ENCODE measurements at regions of chr17 and their contacts with region 1.

Region 1: DNA sequence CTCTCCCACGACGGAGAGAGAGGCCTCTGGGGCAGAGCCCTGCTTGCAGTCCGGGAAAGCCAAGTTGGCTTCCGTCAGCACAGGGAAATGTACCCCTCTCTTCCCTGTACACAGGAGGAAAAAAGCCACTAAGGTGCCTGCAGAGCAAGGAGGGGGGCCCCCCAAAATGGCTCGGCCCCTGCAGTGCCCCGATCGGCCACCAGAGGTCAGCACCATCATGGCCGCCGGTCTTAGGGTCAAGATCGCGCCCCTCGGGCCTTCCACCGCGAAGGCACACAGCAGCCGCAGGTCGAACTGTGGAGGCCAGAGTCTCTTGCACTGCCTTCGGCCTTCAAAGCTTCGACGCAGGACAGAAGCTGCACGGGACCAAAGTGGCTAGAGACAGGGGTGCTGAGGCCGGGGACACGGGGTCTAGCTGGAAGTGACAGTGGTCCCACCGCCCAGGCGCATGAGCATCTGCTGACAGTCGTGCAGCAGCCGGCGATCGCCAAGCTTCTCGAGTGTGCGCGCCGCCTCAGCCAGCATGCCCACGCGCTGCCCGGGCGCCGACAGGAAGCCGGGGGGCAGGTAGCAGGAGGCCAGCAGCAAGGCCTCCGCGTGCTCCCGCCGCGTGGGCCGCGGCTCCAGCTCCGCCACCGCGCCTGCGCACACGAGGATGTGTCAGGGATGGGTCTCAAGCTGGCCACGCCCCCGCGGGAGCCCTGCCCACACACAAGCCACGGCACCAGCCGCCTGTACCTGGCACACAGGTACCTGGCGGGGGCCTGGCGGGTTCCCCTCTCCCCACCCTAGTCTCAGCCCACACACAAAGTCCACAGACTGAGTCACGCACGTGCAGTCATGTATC is 24.4 kb downstream of the SREBF1 start:
- DNase-seq: peak in 4 of 5 donors; percentile 58 to 71 (median 62)
- H3K4me3 ChIP-seq: no peak overlapping the region
- H3K4me3 Mint-ChIP-seq: no peak overlapping the region
- H3K27ac ChIP-seq: peak overlapping the region; percentile 8
- H3K27ac Mint-ChIP-seq: peak overlapping the region in 5 of 7 donors; percentile 24 to 60 (median 53)
- H3K4me1 ChIP-seq: peaks cover 8% of the 10 kb centered on the region
- H3K4me1 Mint-ChIP-seq: peaks cover 0 to 12% (median 2%) of the 10 kb centered on the region in 4 donors
- H3K27me3 ChIP-seq: no peaks in the 10 kb centered on the region
- H3K27me3 Mint-ChIP-seq: no peaks in the 10 kb centered on the region

Region 2: DNA sequence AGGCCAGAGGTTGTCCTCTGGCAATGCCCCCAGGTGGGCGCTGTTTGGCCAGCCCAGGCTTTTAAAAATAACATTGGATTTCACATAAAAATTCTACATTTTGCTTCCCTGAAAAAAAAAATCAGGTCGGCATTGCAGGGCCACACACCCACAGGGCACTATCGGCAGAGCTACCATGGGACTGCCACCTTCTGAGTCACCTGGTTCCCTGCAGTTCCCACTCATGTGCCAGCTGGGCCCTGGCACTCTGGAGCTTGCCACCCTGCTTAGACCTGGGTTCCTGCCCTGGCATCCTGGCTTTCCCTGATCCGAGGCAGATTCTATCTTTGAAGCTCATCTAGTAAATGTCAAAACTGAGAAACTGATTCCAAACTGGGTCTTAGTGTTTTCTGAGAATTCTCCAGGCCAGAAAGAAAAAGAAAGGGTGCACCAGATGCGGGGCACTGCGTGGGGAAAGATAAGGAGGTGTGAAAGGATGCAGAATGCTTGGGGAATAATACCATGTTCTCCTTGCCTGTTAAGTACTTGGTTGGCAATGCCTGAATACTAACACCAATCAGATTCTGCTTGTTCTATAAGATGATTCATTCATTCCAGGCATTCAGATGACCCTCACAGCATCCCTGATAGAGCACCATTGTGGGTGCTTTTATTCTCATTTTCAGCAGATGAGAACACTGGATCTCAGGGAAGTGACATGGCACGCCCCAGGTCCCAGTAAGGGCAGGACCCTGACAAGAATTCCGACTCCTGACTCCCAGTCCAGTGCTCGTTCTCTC is 79.4 kb before region 1 on chr17:
- CTCF ChIA-PET with region 1: no interaction called
- POLR2A ChIA-PET with region 1: no interaction called
- intact Hi-C with region 1: no loop called
- DNase-seq: no peak
- H3K4me3 ChIP-seq: no peak overlapping the region
- H3K4me3 Mint-ChIP-seq: no peak overlapping the region
- H3K27ac ChIP-seq: no peak overlapping the region
- H3K27ac Mint-ChIP-seq: no peak overlapping the region
- H3K4me1 ChIP-seq: no peaks in the 10 kb centered on the region
- H3K4me1 Mint-ChIP-seq: peaks cover 7 to 18% (median 11%) of the 10 kb centered on the region in 4 donors
- H3K27me3 ChIP-seq: no peaks in the 10 kb centered on the region
- H3K27me3 Mint-ChIP-seq: no peaks in the 10 kb centered on the region

Region 3: DNA sequence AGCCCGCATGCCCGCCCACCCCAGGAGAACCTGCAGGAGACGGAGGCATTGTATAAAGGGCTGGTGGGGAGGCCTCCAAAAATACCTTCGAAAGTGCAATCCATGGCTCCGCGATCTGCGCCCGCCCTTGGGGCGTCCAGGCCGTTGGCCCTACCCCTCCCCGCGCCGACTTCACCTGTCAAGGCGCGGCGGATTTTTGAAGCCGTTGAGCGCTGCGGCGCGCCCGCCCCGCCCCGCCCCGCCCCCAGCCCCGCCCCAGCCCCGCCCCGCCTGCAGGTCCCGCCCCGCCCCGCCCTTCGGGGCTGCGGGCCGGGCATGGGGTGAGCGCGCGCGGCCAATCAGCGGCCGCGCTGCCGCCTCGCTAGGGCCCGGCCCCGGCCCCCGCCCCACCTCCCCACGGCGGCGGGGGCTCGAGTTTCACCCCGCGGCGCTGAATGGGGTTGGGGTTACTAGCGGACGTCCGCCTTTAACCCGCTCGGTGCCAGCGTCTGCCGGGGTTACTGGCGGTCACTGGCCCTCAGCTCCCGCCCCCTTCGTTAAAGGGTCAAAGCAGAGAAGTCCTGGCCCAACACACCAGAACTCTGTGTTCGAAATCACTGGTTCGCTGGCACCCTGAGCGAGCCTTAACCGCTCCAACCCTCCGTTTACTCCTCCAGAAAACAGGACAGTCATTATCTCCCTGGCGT is 11.1 kb after region 1 on chr17:
- CTCF ChIA-PET with region 1: interaction called, 17 read pairs
- POLR2A ChIA-PET with region 1: interaction called, 3 read pairs
- intact Hi-C with region 1: no loop called
- DNase-seq: peak; percentile 81 to 87 (median 85)
- H3K4me3 ChIP-seq: peak overlapping the region; percentile 38 to 53
- H3K4me3 Mint-ChIP-seq: peak overlapping the region; percentile 76 to 92 (median 81)
- H3K27ac ChIP-seq: peak overlapping the region; percentile 82
- H3K27ac Mint-ChIP-seq: peak overlapping the region; percentile 88 to 97 (median 96)
- H3K4me1 ChIP-seq: peaks cover 87% of the 10 kb centered on the region
- H3K4me1 Mint-ChIP-seq: peaks cover 41 to 96% (median 76%) of the 10 kb centered on the region in 4 donors
- H3K27me3 ChIP-seq: no peaks in the 10 kb centered on the region
- H3K27me3 Mint-ChIP-seq: no peaks in the 10 kb centered on the region

Region 4: DNA sequence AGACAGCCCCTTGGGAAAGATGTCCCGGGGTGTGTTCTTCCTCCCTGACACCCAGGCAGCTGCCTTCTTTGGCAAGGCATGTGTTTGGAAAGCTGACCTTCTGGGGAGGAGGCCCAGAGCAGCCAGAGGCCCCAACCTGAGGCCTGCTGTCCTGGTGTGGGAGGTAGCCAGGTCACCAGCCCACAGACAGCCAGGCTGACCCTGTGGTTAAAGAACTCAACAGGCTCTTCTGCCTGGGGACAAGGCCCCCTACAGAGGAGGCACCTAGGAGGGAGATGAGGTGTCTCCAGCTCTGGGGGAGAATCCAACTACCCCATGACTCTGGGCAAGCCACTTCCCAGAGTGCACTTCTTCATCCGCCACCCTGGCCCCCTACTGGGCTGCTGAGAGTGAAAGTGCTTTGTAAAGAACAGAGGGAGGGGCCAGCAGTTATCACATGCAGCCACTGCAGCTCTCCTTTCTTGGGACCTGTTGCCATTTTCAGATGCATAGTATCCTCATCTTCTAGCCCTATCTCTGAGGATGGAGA is 37.5 kb after region 1 on chr17:
- CTCF ChIA-PET with region 1: interaction called, 234 read pairs
- POLR2A ChIA-PET with region 1: interaction called, 5 read pairs
- intact Hi-C with region 1: loop called (anchors 1 kb)
- DNase-seq: peak; percentile 64 to 80 (median 71)
- H3K4me3 ChIP-seq: peak overlapping the region in 1 of 2 donors; percentile 22
- H3K4me3 Mint-ChIP-seq: peak overlapping the region in 7 of 8 donors; percentile 32 to 81 (median 55)
- H3K27ac ChIP-seq: peak overlapping the region; percentile 73
- H3K27ac Mint-ChIP-seq: peak overlapping the region; percentile 93 to 97 (median 95)
- H3K4me1 ChIP-seq: peaks cover 54% of the 10 kb centered on the region
- H3K4me1 Mint-ChIP-seq: peaks cover 25 to 63% (median 48%) of the 10 kb centered on the region in 4 donors
- H3K27me3 ChIP-seq: no peaks in the 10 kb centered on the region
- H3K27me3 Mint-ChIP-seq: no peaks in the 10 kb centered on the region

Region 5: DNA sequence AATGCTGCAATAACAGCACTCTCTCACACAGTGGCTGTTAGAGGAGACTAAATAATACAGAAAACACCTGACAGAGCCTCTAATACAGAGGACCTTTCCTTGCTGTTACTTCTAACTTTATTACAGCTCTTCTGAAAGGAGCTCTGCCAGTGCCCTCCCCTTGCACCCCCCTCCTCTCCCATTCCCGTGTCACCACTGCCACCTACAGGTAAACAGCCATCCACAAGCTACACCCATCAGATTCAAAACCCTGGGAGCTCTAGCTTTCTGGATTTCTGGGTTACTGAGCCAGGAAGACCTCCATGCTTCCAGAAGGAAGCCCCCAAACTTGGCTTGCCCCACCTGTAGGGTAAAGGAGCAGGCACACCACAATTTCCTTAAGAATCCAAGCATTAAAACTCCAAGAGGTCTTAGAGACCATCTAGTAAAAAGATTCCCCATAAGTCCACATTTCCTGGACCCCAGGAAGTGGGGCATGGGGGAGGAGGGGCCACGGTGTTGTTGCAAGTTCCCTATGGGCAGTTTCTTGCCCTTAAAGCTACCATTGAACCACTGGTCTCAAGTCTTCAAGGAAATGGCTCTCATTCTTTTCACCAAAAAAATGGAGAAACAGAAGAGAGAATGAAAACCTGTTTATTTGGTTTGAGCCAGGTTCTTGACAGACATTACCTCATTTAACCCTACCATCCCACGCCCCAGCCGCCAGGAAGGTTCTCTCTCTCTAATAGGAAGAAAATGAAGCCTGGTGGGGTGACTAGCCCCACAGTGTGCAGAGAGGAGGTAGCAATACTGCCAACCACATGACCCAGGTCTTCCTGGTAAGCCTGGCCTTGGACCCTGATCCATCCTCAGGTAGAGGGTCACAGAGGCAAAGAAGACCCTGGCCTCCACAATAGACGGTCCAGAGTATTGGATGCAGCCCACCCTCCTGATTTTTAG is 107.0 kb after region 1 on chr17:
- CTCF ChIA-PET with region 1: interaction called, 8 read pairs
- POLR2A ChIA-PET with region 1: no interaction called
- intact Hi-C with region 1: loop called (anchors 1 kb)
- DNase-seq: peak; percentile 58 to 71 (median 61)
- H3K4me3 ChIP-seq: no peak overlapping the region
- H3K4me3 Mint-ChIP-seq: no peak overlapping the region
- H3K27ac ChIP-seq: no peak overlapping the region
- H3K27ac Mint-ChIP-seq: no peak overlapping the region
- H3K4me1 ChIP-seq: peaks cover 3% of the 10 kb centered on the region
- H3K4me1 Mint-ChIP-seq: peaks cover 6 to 25% (median 8%) of the 10 kb centered on the region in 4 donors
- H3K27me3 ChIP-seq: no peaks in the 10 kb centered on the region
- H3K27me3 Mint-ChIP-seq: no peaks in the 10 kb centered on the region

Region 6: DNA sequence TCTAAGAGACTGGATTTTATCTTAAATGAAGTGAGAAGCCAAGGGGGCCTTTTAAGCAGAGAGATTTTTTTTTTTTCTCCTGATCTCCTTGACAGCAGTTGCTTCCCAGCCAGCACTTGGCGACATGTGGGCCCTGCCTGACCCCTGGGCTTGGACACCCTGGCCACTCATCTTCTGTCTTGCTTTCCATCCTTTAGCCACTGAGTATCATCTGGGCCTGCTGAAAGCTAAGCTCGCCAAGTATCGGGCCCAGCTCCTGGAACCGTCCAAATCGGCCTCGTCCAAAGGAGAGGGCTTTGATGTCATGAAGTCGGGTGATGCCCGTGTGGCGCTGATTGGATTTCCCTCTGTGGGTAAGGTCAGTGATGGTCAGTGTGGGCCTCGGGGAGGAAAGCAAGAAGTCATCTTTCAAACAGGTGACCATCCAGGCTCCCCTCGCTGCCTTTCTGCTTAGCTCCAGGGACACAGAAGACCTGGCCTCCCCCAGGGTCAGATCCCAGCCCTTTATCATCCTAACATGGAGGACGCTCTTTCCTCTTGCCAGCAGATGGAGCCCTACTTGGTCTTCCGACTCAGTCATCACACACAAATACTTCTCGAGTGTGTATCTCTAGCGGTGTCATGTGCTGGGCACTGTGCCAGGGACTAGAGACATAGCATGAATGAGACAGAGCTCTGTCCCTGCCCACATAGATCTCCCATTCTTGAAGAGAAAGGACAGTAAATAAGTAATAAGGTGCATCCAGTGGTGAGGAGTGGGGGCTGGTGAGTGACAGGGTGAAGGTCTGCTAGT is 281.4 kb after region 1 on chr17:
- CTCF ChIA-PET with region 1: no interaction called
- POLR2A ChIA-PET with region 1: no interaction called
- intact Hi-C with region 1: no loop called
- DNase-seq: peak in 1 of 5 donors; percentile 14
- H3K4me3 ChIP-seq: no peak overlapping the region
- H3K4me3 Mint-ChIP-seq: no peak overlapping the region
- H3K27ac ChIP-seq: no peak overlapping the region
- H3K27ac Mint-ChIP-seq: peak overlapping the region in 2 of 7 donors; percentile 18 to 32
- H3K4me1 ChIP-seq: peaks cover 10% of the 10 kb centered on the region
- H3K4me1 Mint-ChIP-seq: peaks cover 16 to 30% (median 19%) of the 10 kb centered on the region in 4 donors
- H3K27me3 ChIP-seq: no peaks in the 10 kb centered on the region
- H3K27me3 Mint-ChIP-seq: no peaks in the 10 kb centered on the region